BJ (cell line): ENCODE measurements at regions of chr19 and their contacts with region 1.

Region 1: DNA sequence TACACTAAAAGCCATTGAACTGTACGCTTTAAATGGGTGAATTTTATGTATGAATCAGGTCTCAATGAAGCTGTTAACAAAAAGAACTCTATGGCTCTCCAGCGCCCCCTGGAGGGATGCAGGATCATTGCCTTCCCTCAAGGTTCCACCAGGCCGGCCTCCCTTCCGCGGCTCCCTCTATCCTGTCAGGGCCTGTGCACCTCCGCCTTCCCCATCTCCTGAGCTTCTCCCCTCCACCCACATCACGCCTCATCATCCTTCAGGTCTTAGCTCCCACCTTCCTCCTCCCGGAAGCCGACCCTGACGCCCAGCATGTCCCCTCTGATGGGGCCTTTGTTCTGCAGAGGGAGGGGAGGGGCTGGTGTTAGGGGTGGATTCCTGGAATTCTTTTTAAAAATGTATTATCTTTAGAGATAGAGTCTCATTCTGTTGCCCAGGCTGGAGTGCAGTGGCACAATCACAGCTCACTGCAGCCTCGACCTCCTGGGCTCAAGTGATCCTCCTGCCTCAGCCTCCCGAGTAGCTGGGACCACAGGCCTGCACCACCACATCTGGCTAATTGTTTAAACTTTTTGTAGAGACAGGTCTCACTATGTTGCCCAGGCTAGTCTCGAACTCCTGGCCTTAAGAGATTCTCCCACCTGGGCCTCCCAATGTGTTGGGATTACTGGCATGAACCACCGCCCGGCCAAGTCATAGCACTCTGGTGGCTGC is 27.7 kb downstream of the MEIS3 start:
- DNase-seq: peak; percentile 4
- H3K4me3 ChIP-seq: no peak overlapping the region
- H3K27me3 ChIP-seq: peaks cover 2% of the 10 kb centered on the region; the same call in 1 of the 2 replicates
- CTCF ChIP-seq: peak; percentile 92

Region 2: DNA sequence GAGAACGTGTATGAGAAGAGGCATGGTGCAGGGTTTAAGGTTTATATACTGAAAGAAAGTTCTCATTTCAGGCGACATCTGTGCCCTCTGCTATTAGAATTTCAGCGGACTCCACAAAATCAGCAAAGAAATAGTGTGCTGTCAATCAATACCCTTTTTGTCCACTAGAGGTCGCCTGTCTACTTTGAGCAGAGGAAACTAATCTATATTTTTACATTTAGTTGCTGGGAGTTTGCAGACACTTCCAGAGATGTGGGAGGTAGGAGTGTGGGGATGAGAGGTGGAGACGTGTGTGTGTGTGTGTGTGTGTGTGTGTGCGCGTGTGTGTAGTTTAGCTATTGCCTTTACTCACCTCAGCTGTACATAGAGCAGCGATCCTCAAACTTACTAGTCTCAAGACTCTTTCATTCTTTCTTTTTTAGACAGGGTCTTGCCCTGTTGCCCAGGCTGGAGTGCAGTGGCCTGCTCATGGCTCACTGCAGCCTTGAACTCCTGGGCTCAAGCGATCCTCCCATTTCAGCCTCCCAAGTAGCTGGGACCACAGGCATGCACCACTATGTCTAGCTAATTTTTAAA is 107.3 kb before region 1 on chr19:
- CTCF ChIA-PET with region 1: interaction called, 42 read pairs
- POLR2A ChIA-PET with region 1: interaction called, 4 read pairs
- DNase-seq: no peak
- H3K4me3 ChIP-seq: no peak overlapping the region
- H3K27me3 ChIP-seq: no peaks in the 10 kb centered on the region
- CTCF ChIP-seq: peak; percentile 84

Region 3: GRCh38 chr19:47406711-47407416 is 15.2 kb after region 1 on chr19:
- CTCF ChIA-PET with region 1: interaction called, 29 read pairs
- POLR2A ChIA-PET with region 1: no interaction called
- DNase-seq: no peak
- H3K4me3 ChIP-seq: no peak overlapping the region
- H3K27me3 ChIP-seq: no peaks in the 10 kb centered on the region
- CTCF ChIP-seq: no peak